Activated CD8-positive, alpha-beta T cell treated with anti-CD3 and anti-CD28 coated beads for 36 hours (primary cell): ENCODE measurements at regions of chr3 and their contacts with region 1.

Region 1: GRCh38 chr3:122383771-122384697 is at the start of gene FAM162A:
- DNase-seq: peak; percentile 96
- ATAC-seq: peak; percentile 91
- H3K4me3 Mint-ChIP-seq: peak within 1 kb of the TSS; percentile 97
- H3K27ac Mint-ChIP-seq: peak within 1 kb of the TSS; percentile 96
- H3K4me1 Mint-ChIP-seq: peaks cover 57% of the 10 kb centered on the region
- H3K27me3 Mint-ChIP-seq: no peaks in the 10 kb centered on the region
- CTCF ChIP-seq: no peak
- total RNA-seq, gene FAM162A: 202 to 204 TPM

Region 2: GRCh38 chr3:122208579-122208978 is 175.5 kb before region 1 on chr3:
- CTCF ChIA-PET with region 1: no interaction called
- POLR2A ChIA-PET with region 1: no interaction called
- intact Hi-C with region 1: no loop called
- DNase-seq: no peak
- ATAC-seq: no peak
- H3K4me3 Mint-ChIP-seq: no peak overlapping the region
- H3K27ac Mint-ChIP-seq: no peak overlapping the region
- H3K4me1 Mint-ChIP-seq: no peaks in the 10 kb centered on the region
- H3K27me3 Mint-ChIP-seq: peaks cover 9% of the 10 kb centered on the region
- CTCF ChIP-seq: no peak

Region 3: DNA sequence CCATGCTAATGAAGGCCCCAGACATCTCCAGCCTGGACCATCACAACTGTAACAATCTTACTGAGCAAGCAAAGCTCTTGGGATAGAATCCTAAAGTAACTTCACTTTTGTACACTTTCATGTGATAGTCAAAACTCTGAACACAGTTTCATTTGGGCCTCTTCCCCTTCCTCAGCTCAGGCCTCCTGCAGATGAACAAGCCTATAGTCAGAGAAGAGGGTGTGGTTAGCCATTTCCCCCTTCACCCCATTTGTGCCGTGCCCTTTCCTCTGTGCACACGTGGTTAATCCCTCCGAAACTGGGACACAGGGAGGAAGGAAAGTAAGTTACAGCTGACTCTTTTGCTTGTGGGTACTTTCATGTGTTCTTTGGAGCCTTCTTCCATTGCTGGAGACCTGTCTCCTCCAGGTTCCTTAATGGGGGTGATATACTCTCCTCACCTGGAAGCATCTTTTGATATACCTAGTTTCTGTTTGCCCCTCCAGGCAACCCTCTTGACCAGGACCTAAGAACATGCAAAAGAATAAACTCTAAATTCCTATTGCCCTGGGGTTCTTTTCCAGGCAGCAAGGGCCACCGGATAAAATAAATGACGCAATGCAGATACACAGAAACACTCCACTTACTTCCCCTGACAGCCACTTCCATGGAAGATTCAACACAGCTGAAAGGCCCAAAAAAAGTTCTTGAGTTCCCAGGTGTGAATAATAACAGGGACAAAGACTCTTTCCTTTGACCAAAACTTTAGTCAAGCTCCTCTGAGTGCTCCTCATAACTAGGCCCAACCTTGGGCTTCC is 88.6 kb before region 1 on chr3:
- CTCF ChIA-PET with region 1: no interaction called
- POLR2A ChIA-PET with region 1: no interaction called
- intact Hi-C with region 1: no loop called
- DNase-seq: no peak
- ATAC-seq: peak; percentile 48
- H3K4me3 Mint-ChIP-seq: no peak overlapping the region
- H3K27ac Mint-ChIP-seq: no peak overlapping the region
- H3K4me1 Mint-ChIP-seq: peaks cover 20% of the 10 kb centered on the region
- H3K27me3 Mint-ChIP-seq: peaks cover 1% of the 10 kb centered on the region
- CTCF ChIP-seq: no peak

Region 4: DNA sequence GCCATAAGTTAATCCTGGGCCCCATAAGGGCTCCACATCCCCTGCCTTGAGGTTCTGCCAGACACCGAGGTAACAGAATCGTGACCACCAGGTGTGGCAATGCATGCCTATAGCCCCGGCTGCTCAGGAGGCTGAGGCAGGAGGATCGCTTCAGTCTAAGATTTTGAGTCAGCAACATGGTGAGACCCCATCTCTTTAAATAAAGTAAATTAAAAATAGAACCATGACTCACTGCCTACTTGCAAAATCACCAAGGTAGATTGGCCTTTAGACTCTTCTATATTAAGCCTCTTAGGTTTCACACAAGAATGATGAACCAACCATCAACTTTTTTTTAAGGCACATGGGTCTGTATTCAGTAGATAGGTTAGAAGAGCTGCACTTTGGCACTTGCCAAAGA is 22.2 kb after region 1 on chr3:
- CTCF ChIA-PET with region 1: interaction called, 10 read pairs
- POLR2A ChIA-PET with region 1: interaction called, 4 read pairs
- intact Hi-C with region 1: no loop called
- DNase-seq: peak; percentile 38
- ATAC-seq: peak; percentile 64
- H3K4me3 Mint-ChIP-seq: no peak overlapping the region
- H3K27ac Mint-ChIP-seq: peak overlapping the region; percentile 79
- H3K4me1 Mint-ChIP-seq: peaks cover 35% of the 10 kb centered on the region
- H3K27me3 Mint-ChIP-seq: no peaks in the 10 kb centered on the region
- CTCF ChIP-seq: no peak

Region 5: DNA sequence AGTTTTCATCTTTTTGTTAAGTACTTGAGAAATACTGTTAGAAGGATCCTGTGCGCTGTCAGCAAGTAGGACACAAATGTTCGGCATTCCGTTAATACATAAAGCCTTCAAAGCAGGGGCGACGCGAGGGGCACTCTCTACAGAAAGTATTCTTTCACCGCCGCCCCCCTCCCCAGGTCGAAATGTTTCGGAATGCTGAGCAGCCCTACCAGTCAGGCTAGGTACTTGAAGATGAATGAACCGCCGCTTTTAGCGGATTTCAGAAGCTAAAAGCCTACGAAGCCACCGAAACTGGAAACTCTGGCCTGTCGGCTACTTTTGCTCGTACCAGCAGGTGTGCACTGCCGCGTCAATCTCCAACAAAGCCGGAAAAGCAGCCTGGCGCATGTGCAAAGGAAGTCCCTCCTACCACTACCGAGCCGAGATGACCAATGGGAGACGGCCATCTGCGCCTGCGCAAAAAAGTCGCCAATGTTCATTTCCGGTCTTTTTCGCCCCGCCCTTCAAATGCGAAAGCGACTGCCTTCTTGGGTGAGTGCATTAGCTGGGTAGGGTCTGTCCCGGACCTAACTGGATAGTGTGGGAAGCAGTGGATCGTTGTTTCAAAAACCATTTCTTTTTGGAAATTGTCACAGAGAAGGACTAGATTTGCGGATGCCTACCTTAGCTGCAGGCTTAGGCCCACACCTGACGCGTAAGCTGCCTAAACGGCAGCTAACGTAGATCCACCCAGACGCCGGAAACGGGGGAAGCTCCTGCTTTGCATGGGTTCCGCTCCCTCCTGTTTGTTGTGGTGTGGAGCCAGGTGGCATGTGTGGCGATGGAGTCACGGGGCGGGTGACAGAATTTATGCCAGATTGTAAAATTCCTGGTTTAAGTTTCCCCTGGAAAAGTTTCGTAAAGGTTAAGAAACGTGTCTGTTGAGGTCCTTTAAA is 32.0 kb after region 1 on chr3 and contains the start of gene WDR5B:
- CTCF ChIA-PET with region 1: interaction called, 23 read pairs
- POLR2A ChIA-PET with region 1: interaction called, 19 read pairs
- intact Hi-C with region 1: no loop called
- DNase-seq: peak; percentile 99
- ATAC-seq: peak; percentile 90
- H3K4me3 Mint-ChIP-seq: peak within 1 kb of the TSS; percentile 97
- H3K27ac Mint-ChIP-seq: peak within 1 kb of the TSS; percentile 98
- H3K4me1 Mint-ChIP-seq: peaks cover 46% of the 10 kb centered on the region
- H3K27me3 Mint-ChIP-seq: no peaks in the 10 kb centered on the region
- CTCF ChIP-seq: no peak
- total RNA-seq, gene WDR5B: 3.2 to 3.4 TPM

Region 6: GRCh38 chr3:122555275-122556071 is 171.4 kb after region 1 on chr3:
- CTCF ChIA-PET with region 1: no interaction called
- POLR2A ChIA-PET with region 1: no interaction called
- intact Hi-C with region 1: no loop called
- DNase-seq: no peak
- ATAC-seq: no peak
- H3K4me3 Mint-ChIP-seq: no peak overlapping the region
- H3K27ac Mint-ChIP-seq: no peak overlapping the region
- H3K4me1 Mint-ChIP-seq: peaks cover 8% of the 10 kb centered on the region
- H3K27me3 Mint-ChIP-seq: no peaks in the 10 kb centered on the region
- CTCF ChIP-seq: no peak

Region 7: GRCh38 chr3:122793568-122794416 is 409.8 kb after region 1 on chr3 and contains the start of gene HSPBAP1:
- CTCF ChIA-PET with region 1: no interaction called
- POLR2A ChIA-PET with region 1: no interaction called
- intact Hi-C with region 1: loop called (anchors 10 kb)
- DNase-seq: peak; percentile 96
- ATAC-seq: peak; percentile 61
- H3K4me3 Mint-ChIP-seq: no peak within 1 kb of the TSS
- H3K27ac Mint-ChIP-seq: peak within 1 kb of the TSS; percentile 87
- H3K4me1 Mint-ChIP-seq: peaks cover 29% of the 10 kb centered on the region
- H3K27me3 Mint-ChIP-seq: no peaks in the 10 kb centered on the region
- CTCF ChIP-seq: no peak
- total RNA-seq, gene HSPBAP1: 4.0 to 4.2 TPM